GM10248 (cell line): ENCODE measurements at regions of chr7 and their contacts with region 1.

Region 1: DNA sequence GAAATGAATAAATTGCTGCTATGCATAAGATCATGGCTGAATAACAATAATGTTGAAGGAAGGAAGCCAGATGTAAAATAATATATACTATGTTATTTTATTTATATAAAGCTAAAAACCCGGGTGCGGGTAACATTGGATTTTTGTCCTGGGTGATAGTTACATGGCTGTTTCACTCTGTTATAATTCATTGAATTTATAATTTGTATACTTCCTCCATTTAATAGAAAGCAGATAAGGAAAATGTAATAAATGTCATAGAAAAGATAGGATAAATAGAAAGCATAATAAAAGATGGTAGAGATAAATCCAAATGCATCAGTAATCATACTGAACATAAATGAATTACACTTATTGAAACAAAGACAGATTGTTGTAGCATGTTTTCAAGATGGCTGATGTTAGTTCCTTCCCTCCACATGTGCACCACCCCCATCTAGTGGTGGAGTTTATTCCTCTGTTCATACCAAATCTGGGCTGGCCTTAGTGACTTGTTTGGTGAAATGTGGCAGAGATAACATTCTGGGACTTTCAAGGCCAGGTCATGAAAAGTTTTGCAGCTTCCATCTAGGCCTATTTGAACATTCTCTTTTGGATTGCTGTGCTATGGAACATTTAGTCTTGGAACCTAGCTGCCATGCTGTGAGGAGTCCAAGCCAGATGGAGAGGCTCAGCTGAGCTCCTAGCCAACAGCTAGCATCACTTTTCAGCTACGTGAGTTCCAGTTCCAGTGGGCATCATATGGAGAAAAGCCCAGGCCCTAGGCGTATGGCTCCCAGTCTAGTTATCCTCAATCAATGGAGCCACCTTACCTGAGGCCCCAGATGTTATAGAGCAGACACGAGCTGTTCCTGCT is 46.9 kb downstream of the AHCYL2 start:
- DNase-seq: peak; percentile 59
- CTCF ChIP-seq: peak; percentile 55

Region 2: GRCh38 chr7:129240119-129240815 is 31.5 kb before region 1 on chr7:
- CTCF ChIA-PET with region 1: interaction called, 12 read pairs
- POLR2A ChIA-PET with region 1: no interaction called
- DNase-seq: no peak
- CTCF ChIP-seq: no peak

Region 3: DNA sequence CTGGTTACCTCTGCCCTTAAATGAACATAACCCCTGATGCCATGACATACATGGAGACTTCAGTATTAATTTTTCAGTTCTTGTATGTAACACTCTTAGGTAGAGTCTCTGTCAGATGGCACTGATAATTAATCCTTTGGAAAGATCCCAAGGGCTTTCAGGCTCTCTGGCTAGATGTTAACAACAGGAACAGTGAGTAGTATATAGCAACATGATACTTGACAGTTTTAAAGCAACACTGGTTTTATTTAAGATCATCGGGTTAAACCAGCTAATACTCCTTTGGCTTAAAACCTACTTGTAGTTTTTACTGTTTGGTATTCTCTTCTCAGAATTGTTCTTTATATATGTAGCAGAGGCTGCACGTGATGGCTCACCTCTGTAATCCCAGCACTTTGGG is 19.6 kb before region 1 on chr7:
- CTCF ChIA-PET with region 1: interaction called, 12 read pairs
- POLR2A ChIA-PET with region 1: interaction called, 3 read pairs
- DNase-seq: no peak
- CTCF ChIP-seq: no peak

Region 4: DNA sequence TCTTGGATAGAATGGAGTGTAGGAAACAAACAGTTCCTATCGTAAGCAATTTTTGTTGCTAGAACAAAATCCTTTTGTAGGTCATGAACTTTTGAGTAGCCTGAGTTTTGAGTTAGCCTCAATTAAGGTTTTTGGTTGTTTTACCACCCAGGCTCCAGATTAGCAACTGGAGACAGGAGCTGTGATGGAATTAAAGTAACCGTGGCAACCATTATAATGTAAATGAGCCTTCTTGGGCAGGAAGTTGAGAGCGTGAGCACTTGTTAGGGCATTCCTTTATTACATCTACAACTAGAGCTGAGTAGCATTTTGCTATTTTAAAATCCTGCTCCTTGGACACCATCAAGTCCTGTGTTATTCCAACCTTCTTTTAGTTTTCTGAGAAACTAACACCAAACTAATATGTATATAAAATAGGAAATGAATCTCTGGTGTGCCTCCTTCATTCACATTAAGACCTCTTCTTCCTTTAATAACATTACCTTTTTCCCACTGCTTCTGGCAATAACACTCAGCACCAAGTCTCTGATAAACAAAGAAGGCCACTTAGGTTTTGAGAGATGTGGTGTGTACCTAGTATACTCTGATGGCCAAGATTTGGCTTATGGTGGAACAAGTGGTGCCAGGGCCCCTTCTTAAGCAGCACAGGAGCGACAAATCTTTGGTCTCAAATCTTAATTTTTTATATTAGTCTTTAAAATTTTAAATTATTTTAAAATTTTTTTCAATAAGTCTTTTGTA is 12.9 kb before region 1 on chr7:
- CTCF ChIA-PET with region 1: interaction called, 32 read pairs
- POLR2A ChIA-PET with region 1: no interaction called
- DNase-seq: no peak
- CTCF ChIP-seq: no peak

Region 5: DNA sequence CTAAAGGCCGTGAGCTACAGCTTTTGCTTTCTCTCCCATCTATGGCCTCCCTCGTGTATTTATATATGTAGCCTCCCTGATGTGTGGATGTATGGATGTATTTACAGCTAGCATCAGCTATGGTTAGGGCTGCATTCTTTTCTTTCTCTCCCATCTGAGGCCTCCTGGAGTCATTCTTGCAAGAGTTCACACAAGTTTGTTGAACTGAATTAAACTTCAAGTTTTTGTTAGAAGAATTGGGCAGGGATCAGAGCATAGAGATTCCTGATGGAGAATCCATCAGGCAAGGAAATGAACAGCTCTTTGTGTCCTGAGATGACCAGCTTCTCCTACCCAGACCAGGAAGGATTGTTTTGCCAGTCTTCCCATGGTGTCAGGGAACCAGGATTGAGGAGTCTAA is 13.4 kb after region 1 on chr7:
- CTCF ChIA-PET with region 1: interaction called, 39 read pairs
- POLR2A ChIA-PET with region 1: no interaction called
- DNase-seq: no peak
- CTCF ChIP-seq: no peak